ENCODE measurements at regions of chr2 and their contacts with region 1.

Region 1: DNA sequence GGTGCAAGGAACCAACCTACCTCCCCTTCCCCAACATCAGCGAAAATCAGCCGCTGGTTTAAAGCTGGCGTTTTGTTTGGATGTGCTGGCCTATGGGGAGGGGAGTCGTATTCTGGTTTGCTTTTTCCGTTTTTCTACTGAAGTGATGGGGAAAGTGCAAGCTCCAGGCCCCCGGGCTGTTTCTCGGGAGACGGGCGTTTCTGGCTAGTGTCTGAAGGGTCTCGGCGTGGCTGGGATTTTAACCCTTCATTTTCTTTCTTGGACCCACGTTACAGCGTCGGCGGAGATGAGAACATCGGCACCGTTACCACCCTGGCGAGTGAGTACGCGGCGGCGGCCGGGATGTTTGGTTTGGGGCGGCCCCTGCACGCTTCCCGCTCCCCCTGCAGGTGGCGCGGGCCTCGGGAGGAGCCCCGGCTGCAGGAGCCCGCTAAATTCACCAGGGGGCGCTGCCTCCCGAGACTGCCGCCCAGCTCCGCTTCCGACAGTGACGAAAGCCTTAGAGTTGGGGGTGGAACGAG is 70.7 kb downstream of the PLB1 start:
- DNase-seq: peak; percentile 61
- H3K4me3 ChIP-seq: peak overlapping the region; percentile 65
- H3K27ac ChIP-seq: peak overlapping the region; percentile 49
- H3K27me3 ChIP-seq: no peaks in the 10 kb centered on the region
- CTCF ChIP-seq: peak; percentile 99

Region 2: GRCh38 chr2:28639836-28640235 is 73.3 kb after region 1 on chr2:
- CTCF ChIA-PET with region 1: no interaction called
- POLR2A ChIA-PET with region 1: no interaction called
- DNase-seq: no peak
- H3K4me3 ChIP-seq: no peak overlapping the region
- H3K27ac ChIP-seq: no peak overlapping the region
- H3K27me3 ChIP-seq: no peaks in the 10 kb centered on the region
- CTCF ChIP-seq: no peak

Region 3: DNA sequence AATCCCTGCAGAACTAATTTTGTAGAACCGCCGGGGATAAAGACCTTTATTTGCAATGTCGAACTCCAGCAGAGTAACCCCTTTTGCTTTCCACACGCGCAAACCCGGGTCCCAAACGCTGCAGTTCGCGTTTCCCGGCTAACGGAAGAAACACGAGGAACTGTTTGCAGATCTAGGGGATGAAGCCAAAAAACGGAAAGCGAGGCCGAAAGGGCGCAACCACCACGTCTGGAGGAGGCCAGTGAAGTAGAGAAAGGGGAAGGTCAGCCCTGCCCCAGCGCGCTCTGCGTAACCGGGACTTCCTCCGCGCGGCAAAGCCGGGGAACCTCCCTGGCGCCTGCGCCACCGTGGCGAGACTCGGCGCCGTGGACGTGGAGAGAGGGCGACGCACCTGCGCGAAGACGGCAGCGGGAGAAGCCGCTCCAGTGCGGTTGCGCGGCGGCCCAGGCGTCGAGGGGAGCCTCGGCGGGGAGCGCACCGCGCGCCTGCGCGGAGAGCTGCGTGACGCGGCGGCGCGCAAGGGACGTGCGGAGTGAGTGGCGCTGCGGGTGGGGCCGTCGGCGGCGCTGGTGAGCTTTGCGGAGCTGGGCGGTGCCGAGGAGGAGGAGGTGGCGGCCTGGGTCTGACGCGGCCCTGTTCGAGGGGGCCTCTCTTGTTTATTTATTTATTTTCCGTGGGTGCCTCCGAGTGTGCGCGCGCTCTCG is 184.8 kb after region 1 on chr2 and contains the start of gene PPP1CB:
- CTCF ChIA-PET with region 1: interaction called, 19 read pairs
- POLR2A ChIA-PET with region 1: interaction called, 8 read pairs
- DNase-seq: peak; percentile 92
- H3K4me3 ChIP-seq: peak within 1 kb of the TSS; percentile 93
- H3K27ac ChIP-seq: peak within 1 kb of the TSS; percentile 94
- H3K27me3 ChIP-seq: no peaks in the 10 kb centered on the region
- CTCF ChIP-seq: peak; percentile 20
- polyA plus RNA-seq, gene PPP1CB: 105 and 159 TPM in 2 replicates

Region 4: GRCh38 chr2:28764909-28765711 is 198.5 kb after region 1 on chr2:
- CTCF ChIA-PET with region 1: interaction called, 12 read pairs
- POLR2A ChIA-PET with region 1: no interaction called
- DNase-seq: no peak
- H3K4me3 ChIP-seq: no peak overlapping the region
- H3K27ac ChIP-seq: no peak overlapping the region
- H3K27me3 ChIP-seq: no peaks in the 10 kb centered on the region
- CTCF ChIP-seq: no peak

Region 5: GRCh38 chr2:28801726-28802487 is 235.3 kb after region 1 on chr2:
- CTCF ChIA-PET with region 1: interaction called, 13 read pairs
- POLR2A ChIA-PET with region 1: no interaction called
- DNase-seq: no peak
- H3K4me3 ChIP-seq: no peak overlapping the region
- H3K27ac ChIP-seq: no peak overlapping the region
- H3K27me3 ChIP-seq: no peaks in the 10 kb centered on the region
- CTCF ChIP-seq: no peak

Region 6: DNA sequence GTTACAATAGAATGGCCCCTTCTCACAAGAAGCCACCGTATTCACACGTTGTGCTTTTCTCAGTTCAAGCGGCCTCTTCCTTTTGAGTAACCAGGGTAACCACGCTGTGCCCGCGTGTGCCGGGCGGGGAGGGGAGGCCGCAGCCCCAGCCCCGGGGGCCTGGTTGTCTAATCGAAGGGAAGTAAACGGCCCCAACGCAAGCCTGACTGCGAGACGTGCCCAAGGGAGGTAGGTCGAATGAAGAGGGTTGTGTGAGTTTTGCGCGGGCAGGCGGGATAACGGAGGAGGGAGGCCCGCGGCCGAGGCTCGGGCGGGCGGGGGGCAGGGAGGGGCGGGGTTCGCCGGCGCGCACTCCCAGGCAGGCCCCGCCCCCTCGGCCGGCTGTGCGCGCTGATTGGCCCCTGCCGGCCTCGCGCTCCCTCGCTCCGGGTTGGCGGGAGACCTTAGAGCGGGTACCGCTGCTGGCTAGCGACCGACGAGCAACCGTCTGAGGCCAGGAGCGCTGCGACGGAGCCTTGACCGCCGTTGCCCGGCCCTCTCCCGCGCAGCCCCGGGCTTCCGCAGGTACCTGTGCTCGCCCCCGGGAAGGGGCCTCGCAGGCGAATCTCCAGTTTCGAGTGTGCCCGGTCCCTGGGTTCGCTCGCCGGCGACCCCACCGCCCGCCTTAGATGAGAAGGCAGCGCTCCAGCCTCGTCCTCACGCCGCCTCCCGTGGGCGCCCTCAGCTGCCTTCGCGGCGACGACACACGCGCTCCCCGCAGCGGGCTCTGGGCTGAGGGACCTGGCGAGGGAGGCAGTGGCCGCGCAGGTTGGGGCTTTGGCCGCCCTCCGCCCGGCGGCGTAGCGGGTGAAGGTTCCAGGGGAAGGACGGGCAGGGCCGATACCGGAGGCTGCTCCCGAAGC is 244.1 kb after region 1 on chr2 and contains the start of gene SPDYA:
- CTCF ChIA-PET with region 1: interaction called, 14 read pairs
- POLR2A ChIA-PET with region 1: no interaction called
- DNase-seq: no peak
- H3K4me3 ChIP-seq: peak within 1 kb of the TSS; percentile 58
- H3K27ac ChIP-seq: no peak within 1 kb of the TSS
- H3K27me3 ChIP-seq: no peaks in the 10 kb centered on the region
- CTCF ChIP-seq: no peak
- polyA plus RNA-seq, gene SPDYA: 0.07 and 0.22 TPM in 2 replicates